Activated naive CD4-positive, alpha-beta T cell treated with anti-CD3 and anti-CD28 coated beads for 36 hours (primary cell): ENCODE measurements at regions of chr6 and their contacts with region 1.

Region 1: GRCh38 chr6:8063761-8064637 is at the start of gene BLOC1S5:
- DNase-seq: peak; percentile 98
- H3K4me3 Mint-ChIP-seq: peak within 1 kb of the TSS; percentile 90
- H3K27ac Mint-ChIP-seq: peak within 1 kb of the TSS; percentile 92
- H3K4me1 Mint-ChIP-seq: peaks cover 21% of the 10 kb centered on the region
- H3K27me3 Mint-ChIP-seq: no peaks in the 10 kb centered on the region
- total RNA-seq, gene BLOC1S5: 20.8 to 22.2 TPM

Region 2: DNA sequence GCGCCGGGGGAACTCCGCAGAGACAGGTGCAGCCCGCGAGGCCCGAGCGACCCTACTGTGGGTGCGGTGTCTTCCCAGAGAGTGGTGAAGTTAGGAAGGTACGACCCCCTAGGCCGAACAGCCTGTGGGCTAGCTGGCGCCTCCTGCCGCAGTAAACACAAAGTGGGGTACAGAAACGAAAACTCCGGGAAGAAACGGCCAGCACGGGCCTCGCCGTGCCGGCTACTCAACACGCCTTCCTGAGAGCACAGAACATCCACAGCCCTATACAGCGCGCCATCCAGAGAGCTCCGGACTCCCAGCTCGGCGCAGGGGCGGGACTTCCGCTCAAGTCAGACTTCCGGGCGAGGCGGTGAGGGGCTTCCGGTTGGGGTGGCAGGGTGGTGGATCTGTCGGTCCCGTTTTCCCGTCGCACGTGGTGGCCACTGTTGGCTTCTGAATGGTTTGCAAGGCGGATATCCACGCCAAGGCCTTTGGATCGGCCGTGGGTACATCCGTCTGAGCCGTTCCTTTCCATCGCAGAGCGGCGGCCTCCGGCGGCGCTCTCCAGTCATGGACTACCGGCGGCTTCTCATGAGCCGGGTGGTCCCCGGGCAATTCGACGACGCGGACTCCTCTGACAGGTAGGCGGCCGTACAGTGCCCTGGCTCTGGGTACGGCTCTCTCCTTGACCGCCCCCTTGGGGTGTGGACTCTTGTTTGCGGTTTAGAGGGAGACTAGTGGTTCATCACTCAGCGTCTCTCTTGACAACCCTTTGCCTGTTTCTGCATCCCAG is 674.4 kb before region 1 on chr6 and contains the starts of genes CAGE1 and RIOK1:
- CTCF ChIA-PET with region 1: no interaction called
- intact Hi-C with region 1: loop called (anchors 1 kb)
- DNase-seq: peak; percentile 97
- H3K4me3 Mint-ChIP-seq: peak within 1 kb of the TSS; percentile 94
- H3K27ac Mint-ChIP-seq: peak within 1 kb of the TSS; percentile 97
- H3K4me1 Mint-ChIP-seq: peaks cover 40% of the 10 kb centered on the region
- H3K27me3 Mint-ChIP-seq: no peaks in the 10 kb centered on the region
- total RNA-seq, gene CAGE1: 0.25 to 0.26 TPM
- total RNA-seq, gene RIOK1: 33.8 to 38.5 TPM

Region 3: GRCh38 chr6:7725849-7726415 is 338.1 kb before region 1 on chr6 and contains the start of gene BMP6:
- CTCF ChIA-PET with region 1: interaction called, 4 read pairs
- intact Hi-C with region 1: loop called (anchors 1 kb)
- DNase-seq: peak; percentile 69
- H3K4me3 Mint-ChIP-seq: peak within 1 kb of the TSS; percentile 76
- H3K27ac Mint-ChIP-seq: no peak within 1 kb of the TSS
- H3K4me1 Mint-ChIP-seq: peaks cover 12% of the 10 kb centered on the region
- H3K27me3 Mint-ChIP-seq: peaks cover 65% of the 10 kb centered on the region
- total RNA-seq, gene BMP6: 0.32 to 0.36 TPM

Region 4: GRCh38 chr6:7758456-7758855 is 305.5 kb before region 1 on chr6:
- CTCF ChIA-PET with region 1: no interaction called
- intact Hi-C with region 1: no loop called
- DNase-seq: no peak
- H3K4me3 Mint-ChIP-seq: no peak overlapping the region
- H3K27ac Mint-ChIP-seq: no peak overlapping the region
- H3K4me1 Mint-ChIP-seq: no peaks in the 10 kb centered on the region
- H3K27me3 Mint-ChIP-seq: peaks cover 26% of the 10 kb centered on the region

Region 5: DNA sequence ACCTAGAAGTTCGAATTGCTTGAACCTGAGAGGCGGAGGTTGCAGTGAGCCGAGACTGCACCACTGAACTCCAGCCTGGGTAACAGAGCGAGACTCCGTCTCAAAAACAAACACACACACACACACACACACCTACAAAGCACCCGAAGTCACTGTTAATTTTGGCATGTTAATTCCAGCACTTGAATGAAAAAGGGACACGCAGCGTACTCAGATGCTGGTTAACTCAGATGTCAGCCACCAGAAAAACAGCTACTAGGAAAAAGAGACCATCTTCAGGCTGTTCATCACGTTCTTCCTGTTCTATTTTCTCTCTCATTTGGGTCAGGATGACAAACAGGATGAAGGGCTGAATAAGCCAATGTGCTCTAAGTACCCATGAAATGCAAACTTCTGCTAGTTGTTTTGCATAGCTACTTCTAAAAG is 46.7 kb before region 1 on chr6:
- CTCF ChIA-PET with region 1: interaction called, 3 read pairs
- intact Hi-C with region 1: loop called (anchors 2 kb)
- DNase-seq: no peak
- H3K4me3 Mint-ChIP-seq: peak overlapping the region; percentile 78
- H3K27ac Mint-ChIP-seq: peak overlapping the region; percentile 94
- H3K4me1 Mint-ChIP-seq: peaks cover 8% of the 10 kb centered on the region
- H3K27me3 Mint-ChIP-seq: no peaks in the 10 kb centered on the region

Region 6: DNA sequence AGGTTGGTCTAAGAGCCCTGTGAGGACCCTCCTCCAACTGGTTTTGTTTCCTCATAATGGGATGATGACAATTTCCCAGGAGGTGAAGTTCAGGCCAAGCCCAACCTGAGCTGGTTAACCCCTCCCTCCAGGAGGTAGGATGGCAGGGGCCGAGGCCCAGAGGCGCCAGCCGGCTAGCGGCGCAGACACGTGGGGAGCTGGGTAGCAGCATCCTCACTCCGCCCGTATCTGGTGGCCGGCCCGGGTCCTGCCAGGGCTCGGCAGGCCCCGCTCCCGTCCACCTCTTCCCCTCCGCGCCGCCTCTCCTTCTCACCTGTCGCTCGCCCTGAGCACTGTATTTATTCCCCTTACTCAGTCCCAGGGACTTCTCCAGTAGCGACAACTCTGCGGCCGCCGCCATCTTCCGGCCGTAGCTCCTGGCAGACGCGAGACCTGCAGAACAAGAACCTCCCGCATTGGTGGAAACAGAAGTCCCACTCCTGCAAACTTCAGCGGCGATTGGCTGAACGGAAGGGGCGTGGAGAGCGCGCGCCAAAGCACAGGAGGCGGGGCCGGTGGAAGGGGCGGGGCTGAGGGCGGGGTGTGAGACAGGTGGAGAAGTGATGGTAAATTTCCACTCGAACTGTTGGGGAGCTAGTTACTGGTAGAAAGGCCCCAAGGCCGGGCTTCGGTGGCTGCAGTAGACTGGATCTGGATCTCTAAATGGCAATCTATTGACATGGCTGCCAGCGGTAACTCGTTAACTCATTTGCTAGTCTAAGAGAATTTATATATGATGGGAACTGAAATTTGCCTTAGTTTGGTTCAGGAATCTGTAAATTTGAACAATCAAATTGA is 38.3 kb after region 1 on chr6 and contains the start of gene EEF1E1:
- CTCF ChIA-PET with region 1: interaction called, 13 read pairs
- intact Hi-C with region 1: loop called (anchors 1 kb)
- DNase-seq: peak; percentile 99
- H3K4me3 Mint-ChIP-seq: peak within 1 kb of the TSS; percentile 96
- H3K27ac Mint-ChIP-seq: peak within 1 kb of the TSS; percentile 92
- H3K4me1 Mint-ChIP-seq: peaks cover 35% of the 10 kb centered on the region
- H3K27me3 Mint-ChIP-seq: peaks cover 16% of the 10 kb centered on the region
- total RNA-seq, gene EEF1E1: 65.2 to 71.2 TPM

Region 7: GRCh38 chr6:8325743-8326142 is 261.7 kb after region 1 on chr6:
- CTCF ChIA-PET with region 1: no interaction called
- intact Hi-C with region 1: no loop called
- DNase-seq: no peak
- H3K4me3 Mint-ChIP-seq: no peak overlapping the region
- H3K27ac Mint-ChIP-seq: no peak overlapping the region
- H3K4me1 Mint-ChIP-seq: no peaks in the 10 kb centered on the region
- H3K27me3 Mint-ChIP-seq: no peaks in the 10 kb centered on the region

Region 8: DNA sequence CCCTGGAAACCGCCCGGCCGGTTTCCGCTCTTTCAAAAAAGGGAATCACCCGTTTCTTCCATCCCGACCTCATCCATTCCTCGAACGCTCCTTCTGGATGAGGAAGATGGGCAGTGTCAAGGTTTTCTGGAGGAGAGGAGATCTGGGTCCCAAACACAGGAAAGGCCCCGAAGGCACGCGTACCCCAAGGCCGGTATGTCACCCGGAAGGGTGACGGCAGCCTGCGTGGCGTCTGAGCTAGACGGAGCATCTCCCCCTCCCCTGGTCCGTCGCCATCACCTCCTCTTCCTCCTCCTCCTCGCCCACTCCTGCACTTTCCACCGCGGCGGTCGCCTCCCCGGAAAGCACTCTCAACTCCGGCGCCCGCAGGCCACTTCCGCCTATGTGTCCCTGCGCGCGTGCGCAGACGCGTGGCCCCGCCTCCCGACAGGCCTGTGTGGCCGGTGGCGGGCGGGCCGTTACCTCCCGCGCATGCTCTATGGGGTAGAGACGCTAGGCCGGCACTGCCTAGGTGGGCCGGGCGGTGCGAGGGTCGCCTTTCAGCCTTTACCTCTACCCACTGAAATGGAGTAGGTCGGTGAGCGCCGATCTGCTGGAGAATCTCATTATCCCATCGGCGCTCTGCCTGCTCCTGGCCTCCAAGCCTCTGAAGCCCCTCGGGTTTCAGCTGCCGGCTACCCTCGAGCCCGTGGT is 371.3 kb after region 1 on chr6 and contains the start of gene SLC35B3:
- CTCF ChIA-PET with region 1: no interaction called
- intact Hi-C with region 1: loop called (anchors 1 kb)
- DNase-seq: peak; percentile 97
- H3K4me3 Mint-ChIP-seq: peak within 1 kb of the TSS; percentile 89
- H3K27ac Mint-ChIP-seq: peak within 1 kb of the TSS; percentile 94
- H3K4me1 Mint-ChIP-seq: peaks cover 32% of the 10 kb centered on the region
- H3K27me3 Mint-ChIP-seq: no peaks in the 10 kb centered on the region
- total RNA-seq, gene SLC35B3: 7.7 to 8.0 TPM